Posterior vena cava (tissue), 2 donors: ENCODE measurements at regions of chr1 and their contacts with region 1.

Region 1: DNA sequence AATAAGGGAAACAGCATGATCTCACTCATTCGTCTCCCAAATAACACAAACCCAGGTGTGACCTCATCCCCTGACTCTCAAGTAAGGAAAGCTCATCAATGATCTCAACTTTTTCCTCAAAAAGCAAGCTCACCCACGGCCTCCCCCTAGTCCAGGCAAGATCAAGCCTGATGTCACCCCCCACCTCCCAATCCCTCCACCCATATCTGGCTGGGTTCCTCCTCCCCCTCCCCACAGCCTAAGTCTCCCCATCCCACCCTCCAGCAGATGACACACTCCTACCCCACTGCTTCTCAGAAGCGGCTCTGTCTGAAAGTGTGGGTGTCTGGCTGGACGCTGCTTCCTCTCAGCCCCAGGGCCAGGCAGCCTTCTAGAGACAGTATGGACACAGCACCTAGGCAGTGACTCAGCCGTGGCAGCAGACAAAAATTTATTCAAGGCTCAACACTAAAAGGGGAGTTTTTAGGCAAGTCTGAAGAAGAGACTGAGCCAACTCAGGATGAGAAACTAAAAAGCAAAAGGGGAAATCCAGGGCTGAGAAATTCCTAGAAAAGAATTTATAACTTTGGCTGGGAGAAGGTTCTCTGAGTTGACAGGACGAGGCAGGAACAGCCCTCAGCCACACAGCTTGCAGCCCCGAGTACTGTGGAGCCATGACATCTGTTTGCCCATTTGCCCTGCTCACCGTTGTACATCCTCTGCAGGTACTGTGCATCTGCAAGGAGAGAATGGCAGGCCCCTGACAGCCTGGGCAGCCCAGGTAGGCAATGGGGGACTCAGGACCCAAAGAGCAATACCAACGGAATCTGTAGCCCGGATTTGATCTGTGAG is 81.6 kb upstream of the LRRC8D start:
- DNase-seq: no peak

Region 2: DNA sequence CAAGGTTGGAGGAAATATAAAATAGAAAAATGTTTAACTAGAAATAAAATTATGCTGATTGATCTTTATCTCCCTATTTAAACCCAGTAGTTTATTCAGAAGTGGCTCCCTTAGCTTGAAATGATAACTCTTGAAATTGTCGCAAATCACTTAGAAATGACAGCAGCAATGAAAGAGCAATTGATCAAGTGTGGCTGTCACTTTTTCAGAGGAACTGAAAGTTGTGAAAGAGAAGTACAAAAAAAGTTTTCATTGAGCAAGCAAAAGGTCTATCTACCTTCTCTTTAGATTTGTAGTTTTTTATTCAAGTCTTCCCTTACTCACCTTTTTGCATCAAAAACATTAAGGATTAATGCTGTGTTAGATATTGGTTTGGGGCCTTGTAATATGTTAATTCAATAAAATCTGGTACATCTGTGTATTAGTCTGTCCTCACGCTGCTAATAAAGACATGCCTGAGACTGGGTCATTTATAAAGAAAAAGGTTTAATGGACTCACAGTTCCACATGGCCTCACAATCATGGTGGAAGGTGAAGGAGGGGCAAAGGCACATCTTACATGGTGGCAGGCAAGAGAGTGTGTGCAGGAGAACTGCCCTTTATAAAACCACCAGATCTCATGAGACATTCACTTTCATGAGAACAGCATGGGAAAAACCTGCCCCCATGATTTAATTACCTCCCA is 58.0 kb before region 1 on chr1:
- intact Hi-C with region 1: no loop called
- DNase-seq: no peak

Region 3: GRCh38 chr1:89725631-89726030 is 13.6 kb before region 1 on chr1:
- intact Hi-C with region 1: loop called in 1 of 2 experiments (anchors 1 kb)
- DNase-seq: no peak

Region 4: GRCh38 chr1:89804642-89805237 is 65.5 kb after region 1 on chr1:
- intact Hi-C with region 1: no loop called
- DNase-seq: peak; percentile 88